ENCODE measurements at regions of chr11 and their contacts with region 1.

Region 1: GRCh38 chr11:94973099-94973968 is at the starts of genes CWC15 and KDM4D:
- DNase-seq: peak; percentile 89 to 97 (median 92)
- ATAC-seq: peak; percentile 99
- H3K4me3 ChIP-seq: peak within 1 kb of the TSS; percentile 89
- H3K4me3 Mint-ChIP-seq: peak within 1 kb of the TSS; percentile 99
- H3K27ac ChIP-seq: peak within 1 kb of the TSS; percentile 68 to 77
- H3K27ac Mint-ChIP-seq: peak within 1 kb of the TSS; percentile 92
- H3K4me1 ChIP-seq: no peaks in the 10 kb centered on the region
- H3K4me1 Mint-ChIP-seq: peaks cover 42% of the 10 kb centered on the region
- H3K27me3 ChIP-seq: no peaks in the 10 kb centered on the region
- H3K27me3 Mint-ChIP-seq: no peaks in the 10 kb centered on the region
- CTCF ChIP-seq: no peak
- total RNA-seq, gene CWC15: 121 to 124 TPM
- total RNA-seq, gene KDM4D: 0.16 to 0.22 TPM

Region 2: DNA sequence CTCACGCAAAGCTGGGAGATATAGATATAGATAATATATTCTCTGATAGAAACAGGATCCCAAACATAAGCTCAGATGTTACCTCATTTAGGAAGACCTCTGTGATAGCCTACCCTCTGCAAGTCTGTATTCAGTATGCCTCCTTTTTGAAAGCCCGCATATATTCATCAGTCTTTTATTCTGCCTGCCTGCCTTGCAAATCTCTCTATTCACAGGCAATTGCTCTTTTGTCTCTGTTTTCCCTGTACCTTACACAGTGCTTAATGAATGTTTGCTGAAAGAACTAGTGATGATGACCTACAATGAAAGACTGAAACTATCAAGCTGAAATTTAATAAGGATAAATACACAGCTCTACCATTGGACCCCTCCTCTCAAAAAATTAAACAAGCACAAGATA is 1624.4 kb before region 1 on chr11:
- CTCF ChIA-PET with region 1: no interaction called
- POLR2A ChIA-PET with region 1: no interaction called
- intact Hi-C with region 1: no loop called
- DNase-seq: no peak
- ATAC-seq: no peak
- H3K4me3 ChIP-seq: no peak overlapping the region
- H3K4me3 Mint-ChIP-seq: no peak overlapping the region
- H3K27ac ChIP-seq: no peak overlapping the region
- H3K27ac Mint-ChIP-seq: no peak overlapping the region
- H3K4me1 ChIP-seq: no peaks in the 10 kb centered on the region
- H3K4me1 Mint-ChIP-seq: no peaks in the 10 kb centered on the region
- H3K27me3 ChIP-seq: no peaks in the 10 kb centered on the region
- H3K27me3 Mint-ChIP-seq: peaks cover 6% of the 10 kb centered on the region
- CTCF ChIP-seq: no peak

Region 3: GRCh38 chr11:94493281-94494125 is 479.8 kb before region 1 on chr11 and contains the starts of genes ANKRD49 and MRE11:
- CTCF ChIA-PET with region 1: no interaction called
- POLR2A ChIA-PET with region 1: no interaction called
- intact Hi-C with region 1: loop called in 1 of 2 experiments (anchors 5 kb)
- DNase-seq: peak; percentile 91 to 99 (median 95)
- ATAC-seq: peak; percentile 98
- H3K4me3 ChIP-seq: peak within 1 kb of the TSS; percentile 83
- H3K4me3 Mint-ChIP-seq: peak within 1 kb of the TSS; percentile 97
- H3K27ac ChIP-seq: peak within 1 kb of the TSS; percentile 65 to 86
- H3K27ac Mint-ChIP-seq: peak within 1 kb of the TSS; percentile 92
- H3K4me1 ChIP-seq: peaks cover 8% of the 10 kb centered on the region
- H3K4me1 Mint-ChIP-seq: peaks cover 54% of the 10 kb centered on the region
- H3K27me3 ChIP-seq: no peaks in the 10 kb centered on the region
- H3K27me3 Mint-ChIP-seq: no peaks in the 10 kb centered on the region
- CTCF ChIP-seq: no peak
- total RNA-seq, gene ANKRD49: 54.4 to 56.4 TPM
- total RNA-seq, gene MRE11: 17.0 to 18.6 TPM

Region 4: DNA sequence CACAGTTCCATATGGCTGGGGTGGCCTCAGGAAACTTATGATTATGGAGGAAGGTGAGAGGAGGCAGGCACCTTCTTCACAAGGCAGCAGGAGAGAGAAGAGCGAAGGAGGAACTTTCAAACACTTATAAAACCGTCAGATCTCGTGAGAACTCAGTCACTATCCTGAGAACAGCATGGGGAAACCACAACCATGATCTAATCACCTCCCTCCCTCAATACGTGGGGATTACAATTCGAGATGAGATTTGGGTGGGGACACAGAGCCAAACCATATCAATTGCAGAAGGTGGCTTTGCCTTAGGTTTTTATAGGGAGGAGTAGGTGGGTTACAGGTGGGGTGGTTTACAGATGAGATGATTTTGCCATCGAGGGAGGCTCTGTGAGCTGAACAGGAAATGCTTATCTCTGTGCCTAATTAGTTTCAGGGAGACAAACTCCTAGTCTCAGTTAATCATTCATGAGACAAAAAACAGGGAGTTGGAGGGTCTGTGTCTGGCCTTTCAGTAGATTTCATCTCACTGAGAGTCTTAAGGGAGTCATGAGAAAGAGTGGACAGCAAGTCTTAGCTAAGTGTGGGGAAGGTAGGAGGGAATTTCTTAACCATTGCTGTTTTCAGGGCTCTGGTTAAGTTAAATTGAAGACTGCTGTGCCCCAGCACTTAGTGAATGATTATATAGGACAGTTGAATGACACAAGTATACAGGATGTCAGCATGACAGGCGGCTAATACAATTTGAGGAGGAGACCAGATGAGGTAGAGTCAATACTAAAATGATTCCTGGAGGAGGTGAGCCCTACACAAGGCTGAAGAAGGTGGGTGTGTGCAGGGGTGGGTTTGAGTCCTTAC is 47.7 kb before region 1 on chr11:
- CTCF ChIA-PET with region 1: no interaction called
- POLR2A ChIA-PET with region 1: interaction called, 23 read pairs
- intact Hi-C with region 1: loop called in 1 of 2 experiments (anchors 2 kb)
- DNase-seq: peak in 2 of 14 experiments; percentile 20 to 35
- ATAC-seq: peak; percentile 27
- H3K4me3 ChIP-seq: no peak overlapping the region
- H3K4me3 Mint-ChIP-seq: peak overlapping the region; percentile 47
- H3K27ac ChIP-seq: peak overlapping the region in 1 of 2 donors; percentile 71
- H3K27ac Mint-ChIP-seq: peak overlapping the region; percentile 91
- H3K4me1 ChIP-seq: peaks cover 44% of the 10 kb centered on the region
- H3K4me1 Mint-ChIP-seq: peaks cover 73% of the 10 kb centered on the region
- H3K27me3 ChIP-seq: no peaks in the 10 kb centered on the region
- H3K27me3 Mint-ChIP-seq: no peaks in the 10 kb centered on the region
- CTCF ChIP-seq: no peak

Region 5: DNA sequence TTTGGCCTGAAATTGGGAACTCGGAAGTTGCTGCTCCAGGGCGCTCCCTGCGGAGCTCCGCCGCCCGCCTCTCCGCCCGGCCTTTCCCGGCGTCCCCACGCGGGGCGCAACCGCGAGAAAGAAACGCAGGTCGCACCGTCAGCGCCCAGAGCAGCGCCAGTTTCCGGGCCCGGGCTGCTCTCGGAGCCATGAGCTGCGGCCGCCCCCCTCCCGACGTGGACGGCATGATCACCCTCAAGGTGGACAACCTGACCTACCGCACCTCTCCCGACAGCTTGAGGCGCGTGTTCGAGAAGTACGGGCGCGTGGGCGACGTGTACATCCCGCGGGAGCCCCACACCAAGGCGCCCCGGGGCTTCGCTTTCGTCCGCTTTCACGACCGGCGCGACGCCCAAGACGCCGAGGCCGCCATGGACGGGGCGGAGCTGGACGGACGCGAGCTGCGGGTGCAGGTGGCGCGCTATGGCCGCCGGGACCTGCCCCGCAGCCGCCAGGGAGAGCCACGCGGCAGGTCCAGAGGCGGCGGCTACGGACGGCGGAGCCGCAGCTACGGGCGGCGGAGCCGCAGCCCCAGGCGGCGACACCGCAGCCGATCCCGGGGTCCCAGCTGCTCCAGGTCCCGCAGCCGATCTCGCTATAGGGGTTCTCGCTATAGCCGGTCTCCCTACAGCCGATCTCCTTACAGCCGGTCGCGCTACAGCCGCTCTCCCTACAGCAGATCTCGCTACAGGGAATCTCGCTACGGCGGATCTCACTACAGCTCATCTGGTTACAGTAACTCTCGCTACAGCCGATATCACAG is 93.9 kb after region 1 on chr11:
- CTCF ChIA-PET with region 1: interaction called, 4 read pairs
- POLR2A ChIA-PET with region 1: interaction called, 82 read pairs
- intact Hi-C with region 1: loop called (anchors 2 to 10 kb)
- DNase-seq: peak; percentile 53 to 88 (median 69)
- ATAC-seq: peak; percentile 63
- H3K4me3 ChIP-seq: peak overlapping the region; percentile 95
- H3K4me3 Mint-ChIP-seq: peak overlapping the region; percentile 98
- H3K27ac ChIP-seq: peak overlapping the region; percentile 87 to 90
- H3K27ac Mint-ChIP-seq: peak overlapping the region; percentile 99
- H3K4me1 ChIP-seq: peaks cover 12% of the 10 kb centered on the region
- H3K4me1 Mint-ChIP-seq: peaks cover 38% of the 10 kb centered on the region
- H3K27me3 ChIP-seq: no peaks in the 10 kb centered on the region
- H3K27me3 Mint-ChIP-seq: no peaks in the 10 kb centered on the region
- CTCF ChIP-seq: peak; percentile 60

Region 6: GRCh38 chr11:95254131-95254704 is 280.9 kb after region 1 on chr11:
- CTCF ChIA-PET with region 1: no interaction called
- POLR2A ChIA-PET with region 1: no interaction called
- intact Hi-C with region 1: loop called in 1 of 2 experiments (anchors 10 kb)
- DNase-seq: peak; percentile 64 to 93 (median 74)
- ATAC-seq: peak; percentile 98
- H3K4me3 ChIP-seq: peak overlapping the region; percentile 53
- H3K4me3 Mint-ChIP-seq: peak overlapping the region; percentile 92
- H3K27ac ChIP-seq: peak overlapping the region; percentile 53 to 58
- H3K27ac Mint-ChIP-seq: peak overlapping the region; percentile 92
- H3K4me1 ChIP-seq: peaks cover 31% of the 10 kb centered on the region
- H3K4me1 Mint-ChIP-seq: peaks cover 55% of the 10 kb centered on the region
- H3K27me3 ChIP-seq: no peaks in the 10 kb centered on the region
- H3K27me3 Mint-ChIP-seq: no peaks in the 10 kb centered on the region
- CTCF ChIP-seq: no peak

Region 7: DNA sequence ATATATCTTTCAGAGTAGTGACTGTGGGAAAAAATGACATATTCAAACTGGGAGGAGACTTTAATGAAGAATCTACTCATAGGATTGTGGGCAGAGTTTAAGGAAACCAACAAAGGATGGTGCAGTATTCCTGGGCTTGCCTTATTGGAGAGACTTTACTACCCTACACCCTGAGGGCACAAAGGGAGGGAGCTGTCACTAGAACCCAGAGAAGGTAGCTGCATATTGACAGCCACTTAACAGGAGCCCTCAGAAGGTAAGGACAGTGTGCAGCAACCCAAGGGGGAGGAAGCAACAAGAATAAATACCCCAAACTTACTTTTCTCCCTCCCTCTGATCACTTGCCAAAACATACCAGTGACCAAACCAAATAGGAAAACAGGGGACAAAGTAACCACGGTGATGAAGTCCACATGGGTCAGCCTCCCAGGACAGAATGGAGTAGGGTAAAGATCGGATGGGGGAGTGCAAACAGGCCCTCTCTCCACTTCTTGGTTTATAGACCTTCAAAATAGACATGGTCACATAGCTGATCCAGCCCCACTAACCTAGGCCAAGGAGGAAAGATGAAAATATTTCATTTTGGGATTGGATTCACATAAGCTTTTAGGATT is 379.5 kb after region 1 on chr11:
- CTCF ChIA-PET with region 1: no interaction called
- POLR2A ChIA-PET with region 1: no interaction called
- intact Hi-C with region 1: no loop called
- DNase-seq: no peak
- ATAC-seq: no peak
- H3K4me3 ChIP-seq: no peak overlapping the region
- H3K4me3 Mint-ChIP-seq: no peak overlapping the region
- H3K27ac ChIP-seq: no peak overlapping the region
- H3K27ac Mint-ChIP-seq: no peak overlapping the region
- H3K4me1 ChIP-seq: no peaks in the 10 kb centered on the region
- H3K4me1 Mint-ChIP-seq: no peaks in the 10 kb centered on the region
- H3K27me3 ChIP-seq: no peaks in the 10 kb centered on the region
- H3K27me3 Mint-ChIP-seq: no peaks in the 10 kb centered on the region
- CTCF ChIP-seq: no peak